Activated CD4-positive, alpha-beta memory T cell treated with anti-CD3 and anti-CD28 coated beads for 36 hours (primary cell): ENCODE measurements at regions of chr17 and their contacts with region 1.

Region 1: GRCh38 chr17:7887482-7888183 is 956 bp upstream of the CHD3 start:
- DNase-seq: peak; percentile 95
- H3K4me3 Mint-ChIP-seq: no peak overlapping the region
- H3K27ac Mint-ChIP-seq: no peak overlapping the region
- H3K4me1 Mint-ChIP-seq: no peaks in the 10 kb centered on the region
- H3K27me3 Mint-ChIP-seq: no peaks in the 10 kb centered on the region

Region 2: GRCh38 chr17:7834962-7835813 is 52.4 kb before region 1 on chr17:
- CTCF ChIA-PET with region 1: interaction called, 6 read pairs
- POLR2A ChIA-PET with region 1: interaction called, 4 read pairs
- intact Hi-C with region 1: loop called (anchors 1 kb)
- DNase-seq: peak; percentile 95
- H3K4me3 Mint-ChIP-seq: peak overlapping the region; percentile 90
- H3K27ac Mint-ChIP-seq: peak overlapping the region; percentile 95
- H3K4me1 Mint-ChIP-seq: peaks cover 43% of the 10 kb centered on the region
- H3K27me3 Mint-ChIP-seq: no peaks in the 10 kb centered on the region

Region 3: DNA sequence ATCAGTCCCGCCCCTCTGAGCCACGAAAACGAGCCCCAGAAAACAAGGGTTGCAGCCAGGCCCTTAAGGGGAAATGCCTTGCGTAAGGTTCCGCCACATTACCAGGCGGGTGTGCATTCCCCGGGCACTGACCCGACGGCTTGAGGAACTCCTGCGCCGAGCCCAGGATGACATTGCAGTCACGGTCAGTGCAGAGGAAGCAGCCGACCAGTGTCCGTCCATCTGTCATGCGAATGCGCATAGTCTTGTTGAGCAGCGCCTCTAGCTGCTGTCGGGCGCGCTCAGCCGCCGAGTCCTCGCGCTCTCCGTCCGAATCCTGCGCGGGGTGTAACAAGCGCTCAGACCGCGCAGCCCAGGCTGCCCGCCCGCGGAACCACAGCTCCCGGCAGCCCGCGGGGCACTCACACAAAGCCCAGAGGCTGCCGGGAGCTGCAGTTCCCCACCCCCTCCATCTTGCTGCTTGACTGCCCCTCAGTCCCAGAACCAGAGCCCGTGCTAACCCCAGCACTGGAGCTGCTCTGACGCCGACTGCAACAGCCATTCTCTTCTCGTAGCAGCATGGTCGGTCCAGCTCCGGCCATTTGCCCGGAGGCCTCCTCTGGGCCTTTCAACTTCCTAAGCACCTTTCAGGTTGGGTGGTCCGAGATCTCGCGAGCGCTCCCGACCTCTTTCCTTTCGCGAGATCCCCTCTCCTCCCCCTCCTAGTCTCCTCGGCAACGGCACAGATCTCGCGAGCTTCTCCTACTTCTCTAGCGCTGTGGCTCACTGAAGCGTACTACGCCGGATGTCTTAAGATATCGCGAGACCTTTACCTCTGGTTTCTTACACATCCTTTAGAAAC is 30.5 kb before region 1 on chr17 and contains the start of gene NAA38:
- CTCF ChIA-PET with region 1: interaction called, 10 read pairs
- POLR2A ChIA-PET with region 1: interaction called, 19 read pairs
- intact Hi-C with region 1: loop called (anchors 1 kb)
- DNase-seq: peak; percentile 97
- H3K4me3 Mint-ChIP-seq: no peak within 1 kb of the TSS
- H3K27ac Mint-ChIP-seq: no peak within 1 kb of the TSS
- H3K4me1 Mint-ChIP-seq: peaks cover 24% of the 10 kb centered on the region
- H3K27me3 Mint-ChIP-seq: no peaks in the 10 kb centered on the region
- total RNA-seq, gene NAA38: 68.2 to 74.7 TPM

Region 4: GRCh38 chr17:7931709-7932482 is 44.3 kb after region 1 on chr17 and contains the starts of genes CNTROB and TRAPPC1:
- CTCF ChIA-PET with region 1: interaction called, 3 read pairs
- POLR2A ChIA-PET with region 1: no interaction called
- intact Hi-C with region 1: loop called (anchors 1 kb)
- DNase-seq: peak; percentile 100
- H3K4me3 Mint-ChIP-seq: peak within 1 kb of the TSS; percentile 93
- H3K27ac Mint-ChIP-seq: peak within 1 kb of the TSS; percentile 88
- H3K4me1 Mint-ChIP-seq: peaks cover 47% of the 10 kb centered on the region
- H3K27me3 Mint-ChIP-seq: no peaks in the 10 kb centered on the region
- total RNA-seq, gene CNTROB: 45.9 to 50.1 TPM
- total RNA-seq, gene TRAPPC1: 197 to 201 TPM

Region 5: GRCh38 chr17:8016632-8017478 is 129.2 kb after region 1 on chr17:
- CTCF ChIA-PET with region 1: no interaction called
- POLR2A ChIA-PET with region 1: no interaction called
- intact Hi-C with region 1: no loop called
- DNase-seq: peak; percentile 76
- H3K4me3 Mint-ChIP-seq: peak overlapping the region; percentile 62
- H3K27ac Mint-ChIP-seq: no peak overlapping the region
- H3K4me1 Mint-ChIP-seq: peaks cover 12% of the 10 kb centered on the region
- H3K27me3 Mint-ChIP-seq: peaks cover 8% of the 10 kb centered on the region

Region 6: DNA sequence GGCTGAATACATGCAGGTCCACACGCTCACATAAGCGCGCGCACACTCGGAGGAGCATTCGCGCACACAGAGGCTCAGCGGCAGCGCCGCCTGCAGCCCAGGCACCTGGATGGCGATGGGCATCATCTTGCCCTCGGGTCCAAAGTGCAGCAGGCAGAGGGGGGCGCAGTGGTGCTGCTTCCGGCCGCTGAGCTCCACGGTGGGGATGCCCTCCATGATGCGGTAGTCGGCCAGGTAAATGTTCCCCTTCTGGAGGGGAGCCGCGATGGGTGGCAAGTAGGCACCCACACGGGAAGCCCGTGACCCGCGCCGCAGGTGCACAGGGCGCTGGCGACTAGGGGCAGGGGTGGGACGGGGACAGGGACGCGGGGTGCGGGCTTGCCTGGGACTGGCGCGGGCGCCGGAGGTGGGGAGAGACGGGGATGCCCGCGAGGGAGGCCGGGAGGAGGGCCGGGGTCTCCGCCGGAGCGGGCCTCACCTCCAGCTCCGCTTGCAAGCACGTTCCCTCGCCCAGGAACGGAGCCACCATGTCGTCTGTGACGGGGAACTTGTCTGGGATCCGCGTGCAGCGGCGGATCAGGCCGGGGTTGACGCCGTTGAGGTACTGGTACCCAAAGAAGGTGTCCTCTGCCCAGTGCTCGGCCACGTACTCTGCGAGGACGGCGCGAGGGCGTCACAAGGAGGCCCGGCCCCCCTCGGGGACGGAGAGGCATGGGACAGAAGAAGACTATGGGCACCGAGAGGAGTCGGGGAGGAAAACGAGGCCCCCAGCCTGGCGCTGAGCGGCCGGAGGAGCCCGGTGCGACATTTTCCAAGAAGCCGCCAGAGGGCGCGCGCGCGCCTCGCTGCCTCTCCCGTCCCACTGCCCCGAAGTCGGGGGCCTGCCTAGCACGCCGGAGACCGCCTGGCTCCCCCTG is 191.9 kb after region 1 on chr17:
- CTCF ChIA-PET with region 1: no interaction called
- POLR2A ChIA-PET with region 1: no interaction called
- intact Hi-C with region 1: no loop called
- DNase-seq: peak; percentile 89
- H3K4me3 Mint-ChIP-seq: peak overlapping the region; percentile 93
- H3K27ac Mint-ChIP-seq: peak overlapping the region; percentile 81
- H3K4me1 Mint-ChIP-seq: peaks cover 13% of the 10 kb centered on the region
- H3K27me3 Mint-ChIP-seq: peaks cover 10% of the 10 kb centered on the region